Body of pancreas (tissue), 4 donors: ENCODE measurements at regions of chr18 and their contacts with region 1.

Region 1: GRCh38 chr18:3869848-3870247 is 419.9 kb downstream of the TGIF1 start:
- DNase-seq: peak in 1 of 4 donors; percentile 13
- ATAC-seq: peak; percentile 77
- H3K4me3 ChIP-seq: no peak overlapping the region
- H3K27ac ChIP-seq: no peak overlapping the region
- H3K4me1 ChIP-seq: no peaks in the 10 kb centered on the region
- H3K27me3 ChIP-seq: no peaks in the 10 kb centered on the region
- CTCF ChIP-seq: peak in 5 of 7 experiments; percentile 35 to 65 (median 58)
- POLR2A ChIP-seq: no peak

Region 2: DNA sequence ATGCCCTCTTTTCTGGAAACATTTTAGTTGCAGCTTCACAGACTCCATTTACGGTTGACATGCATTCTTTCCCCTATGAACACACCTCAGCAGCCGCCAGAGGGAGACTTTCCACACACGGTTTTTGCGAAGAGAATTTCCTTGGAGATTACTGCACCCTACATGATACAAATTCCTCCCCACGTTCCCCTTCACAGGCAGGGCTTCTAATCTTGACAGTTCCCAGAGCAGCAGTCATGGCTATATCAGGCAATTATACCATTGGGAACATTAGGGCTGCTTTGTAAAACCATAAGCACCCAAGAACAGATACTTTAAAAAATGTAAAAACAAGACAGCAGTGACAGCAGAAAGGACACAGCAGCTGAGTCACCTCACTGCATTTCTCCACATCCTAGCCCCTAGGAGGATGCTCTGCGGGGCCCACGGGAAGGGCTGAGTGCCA is 166.1 kb before region 1 on chr18:
- intact Hi-C with region 1: loop called (anchors 10 kb)
- DNase-seq: peak; percentile 53 to 70 (median 65)
- ATAC-seq: peak; percentile 81
- H3K4me3 ChIP-seq: no peak overlapping the region
- H3K27ac ChIP-seq: no peak overlapping the region
- H3K4me1 ChIP-seq: no peaks in the 10 kb centered on the region
- H3K27me3 ChIP-seq: no peaks in the 10 kb centered on the region
- CTCF ChIP-seq: peak; percentile 51 to 80 (median 65)
- POLR2A ChIP-seq: no peak

Region 3: DNA sequence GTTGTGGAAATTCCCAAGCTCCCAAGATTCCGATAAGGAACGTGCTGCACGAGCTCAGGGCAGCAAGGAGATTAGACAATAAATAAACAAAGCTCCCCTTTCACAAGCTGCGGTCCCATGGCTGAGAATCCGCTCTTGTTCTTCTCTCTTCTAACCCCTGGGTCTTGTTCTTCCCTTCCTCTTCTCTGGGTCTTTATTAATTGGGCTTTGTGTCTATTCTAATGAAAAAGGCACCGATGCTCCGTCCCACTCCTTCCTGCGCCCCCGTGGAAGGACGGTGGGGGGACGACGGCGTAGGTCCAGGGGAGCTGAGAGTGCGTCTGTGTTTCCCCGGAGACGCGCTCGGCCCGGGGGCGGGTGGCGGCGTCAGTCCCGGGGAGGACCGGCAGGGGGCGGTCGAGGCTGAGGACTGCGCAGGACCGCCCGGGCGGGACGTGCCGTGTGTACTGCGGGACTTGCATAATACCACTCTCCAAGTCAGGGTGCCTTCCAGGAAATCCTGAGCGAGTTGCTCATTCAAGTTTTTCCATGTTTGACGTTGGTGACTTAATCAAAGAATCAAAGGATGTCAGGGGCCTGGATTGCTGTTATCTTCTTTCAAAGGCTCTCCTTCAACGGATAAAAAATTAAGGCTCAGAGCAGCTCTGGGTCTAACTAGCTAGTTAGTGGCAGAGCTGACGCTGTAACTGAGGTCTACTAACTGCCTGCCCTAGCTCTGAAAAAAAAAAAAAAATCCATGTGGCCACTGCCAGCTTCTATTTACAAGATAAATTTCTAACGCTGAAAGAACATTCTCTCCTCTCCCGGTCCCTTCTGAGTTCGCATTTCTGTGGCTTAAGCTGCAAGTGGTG is 98.5 kb before region 1 on chr18:
- intact Hi-C with region 1: loop called (anchors 5 kb)
- DNase-seq: peak; percentile 86 to 91 (median 89)
- ATAC-seq: peak; percentile 94
- H3K4me3 ChIP-seq: no peak overlapping the region
- H3K27ac ChIP-seq: peak overlapping the region in 3 of 4 donors; percentile 45 to 77 (median 58)
- H3K4me1 ChIP-seq: peaks cover 39% of the 10 kb centered on the region
- H3K27me3 ChIP-seq: no peaks in the 10 kb centered on the region
- CTCF ChIP-seq: peak; percentile 93 to 98 (median 96)
- POLR2A ChIP-seq: peak in 1 of 3 donors; percentile 8